PC-9 (cell line): ENCODE measurements at regions of chr3 and their contacts with region 1.

Region 1: DNA sequence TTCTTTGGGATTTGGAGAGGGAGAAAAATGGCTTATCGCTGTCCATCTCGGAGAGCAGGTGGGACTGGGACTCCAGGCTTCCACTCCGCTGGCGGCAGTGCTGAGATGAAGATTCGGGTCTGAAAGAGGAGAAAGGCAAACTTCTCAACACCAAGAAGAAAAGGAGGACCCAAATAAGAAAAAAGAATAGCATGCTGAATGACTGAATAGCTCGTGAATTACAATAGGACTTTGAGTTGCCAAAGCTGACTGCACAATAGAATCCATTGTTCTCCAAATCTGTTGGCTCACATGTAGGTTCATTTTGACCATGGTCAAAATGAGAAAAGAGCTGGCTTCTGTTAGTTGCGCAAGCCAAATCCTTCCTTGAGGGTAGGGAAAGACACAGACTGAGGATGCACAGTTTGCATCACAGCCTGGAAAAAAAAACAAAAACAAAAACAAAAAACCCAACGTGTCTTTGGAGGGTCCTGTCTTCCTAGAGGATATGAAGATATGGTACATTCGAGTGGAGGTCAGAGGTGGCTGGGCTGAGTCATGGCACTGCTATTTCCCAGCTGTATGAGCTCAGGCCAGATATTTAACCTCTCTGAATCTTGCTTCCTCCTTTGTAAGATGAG is 59.3 kb upstream of the LMOD3 start:
- DNase-seq: peak; percentile 40 to 67
- H3K4me3 ChIP-seq: no peak overlapping the region
- H3K27ac ChIP-seq: peak overlapping the region; percentile 97
- H3K4me1 ChIP-seq: peaks cover 60% of the 10 kb centered on the region
- H3K27me3 ChIP-seq: no peaks in the 10 kb centered on the region
- CTCF ChIP-seq: no peak

Region 2: GRCh38 chr3:69212411-69213139 is 30.9 kb after region 1 on chr3:
- CTCF ChIA-PET with region 1: interaction called, 13 read pairs
- POLR2A ChIA-PET with region 1: no interaction called
- intact Hi-C with region 1: loop called (anchors 1 kb)
- DNase-seq: peak in 1 of 2 experiments; percentile 95
- H3K4me3 ChIP-seq: no peak overlapping the region
- H3K27ac ChIP-seq: peak overlapping the region; percentile 97
- H3K4me1 ChIP-seq: peaks cover 45% of the 10 kb centered on the region
- H3K27me3 ChIP-seq: no peaks in the 10 kb centered on the region
- CTCF ChIP-seq: no peak

Region 3: DNA sequence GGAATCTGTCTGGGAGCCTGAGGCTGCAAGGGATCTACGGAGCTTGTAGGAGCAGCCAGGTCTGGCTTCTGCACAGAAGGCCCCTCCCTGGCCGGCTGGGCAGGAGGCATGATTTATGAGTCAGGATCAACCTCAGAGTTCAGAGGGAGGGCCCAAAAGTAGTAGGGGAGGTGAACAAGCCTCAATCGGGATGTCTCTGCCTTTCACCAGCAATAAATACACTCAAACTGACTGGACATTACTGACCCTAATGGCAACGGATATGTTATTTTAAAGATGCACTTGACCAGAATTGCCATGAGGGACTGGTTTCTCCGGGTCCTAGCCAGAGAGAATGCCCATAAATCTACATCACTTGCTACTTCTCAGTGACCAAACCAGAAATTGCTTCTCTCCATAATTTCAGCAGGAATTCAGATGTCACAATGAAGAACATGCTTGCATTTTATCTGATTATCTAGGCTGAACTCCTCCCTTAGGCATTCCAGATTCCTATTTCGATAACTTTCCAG is 50.3 kb after region 1 on chr3:
- CTCF ChIA-PET with region 1: interaction called, 5 read pairs
- POLR2A ChIA-PET with region 1: no interaction called
- intact Hi-C with region 1: loop called (anchors 1 kb)
- DNase-seq: peak; percentile 80 to 92
- H3K4me3 ChIP-seq: peak overlapping the region; percentile 35; the same call in 1 of the 2 replicates
- H3K27ac ChIP-seq: peak overlapping the region; percentile 92
- H3K4me1 ChIP-seq: peaks cover 83% of the 10 kb centered on the region
- H3K27me3 ChIP-seq: no peaks in the 10 kb centered on the region
- CTCF ChIP-seq: no peak

Region 4: DNA sequence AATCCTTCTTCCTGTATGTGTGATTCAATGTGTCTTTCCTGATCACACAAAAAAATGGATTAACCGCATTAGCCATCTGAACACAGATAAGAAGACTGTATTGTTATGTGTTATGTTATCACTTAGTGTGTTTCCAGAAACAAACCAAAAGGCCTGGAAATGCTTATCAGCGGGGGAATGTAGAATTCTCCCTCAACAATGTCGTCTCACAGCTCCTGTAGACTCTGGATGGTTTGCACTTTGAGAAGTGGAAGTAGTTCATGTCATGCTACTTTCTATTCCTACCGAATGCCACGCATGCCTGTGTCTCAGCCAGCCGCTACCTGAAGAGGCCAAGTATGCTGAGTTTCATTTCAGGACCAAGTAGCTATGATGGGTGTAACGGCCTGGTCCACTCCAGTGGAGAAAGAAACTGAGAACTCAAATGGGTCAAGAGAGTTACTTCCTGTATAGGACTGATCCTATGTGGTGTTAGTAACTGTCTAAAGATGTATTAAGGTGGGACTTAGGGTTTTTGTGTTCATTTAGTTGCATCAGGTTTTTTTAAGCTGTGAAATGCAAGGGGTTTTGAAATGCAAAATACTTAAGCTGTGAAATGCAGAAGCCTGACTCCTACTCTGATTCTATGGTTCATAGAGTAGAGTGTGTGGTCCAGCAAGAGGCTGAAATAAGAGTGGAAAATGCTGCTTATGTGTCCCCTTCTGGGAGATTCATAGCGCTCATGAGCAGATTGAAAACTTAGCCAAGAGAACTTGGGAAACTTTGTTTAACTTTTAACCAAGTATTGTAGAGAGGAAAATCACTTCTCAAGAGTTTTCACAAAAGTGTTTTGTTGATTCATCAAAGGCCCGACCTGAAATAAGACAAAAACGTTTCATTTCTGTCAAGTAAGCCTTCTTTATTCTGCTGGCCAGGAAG is 59.2 kb after region 1 on chr3:
- CTCF ChIA-PET with region 1: interaction called, 7 read pairs
- POLR2A ChIA-PET with region 1: no interaction called
- intact Hi-C with region 1: loop called (anchors 2 kb)
- DNase-seq: no peak
- H3K4me3 ChIP-seq: no peak overlapping the region
- H3K27ac ChIP-seq: no peak overlapping the region
- H3K4me1 ChIP-seq: peaks cover 30% of the 10 kb centered on the region
- H3K27me3 ChIP-seq: no peaks in the 10 kb centered on the region
- CTCF ChIP-seq: no peak

Region 5: DNA sequence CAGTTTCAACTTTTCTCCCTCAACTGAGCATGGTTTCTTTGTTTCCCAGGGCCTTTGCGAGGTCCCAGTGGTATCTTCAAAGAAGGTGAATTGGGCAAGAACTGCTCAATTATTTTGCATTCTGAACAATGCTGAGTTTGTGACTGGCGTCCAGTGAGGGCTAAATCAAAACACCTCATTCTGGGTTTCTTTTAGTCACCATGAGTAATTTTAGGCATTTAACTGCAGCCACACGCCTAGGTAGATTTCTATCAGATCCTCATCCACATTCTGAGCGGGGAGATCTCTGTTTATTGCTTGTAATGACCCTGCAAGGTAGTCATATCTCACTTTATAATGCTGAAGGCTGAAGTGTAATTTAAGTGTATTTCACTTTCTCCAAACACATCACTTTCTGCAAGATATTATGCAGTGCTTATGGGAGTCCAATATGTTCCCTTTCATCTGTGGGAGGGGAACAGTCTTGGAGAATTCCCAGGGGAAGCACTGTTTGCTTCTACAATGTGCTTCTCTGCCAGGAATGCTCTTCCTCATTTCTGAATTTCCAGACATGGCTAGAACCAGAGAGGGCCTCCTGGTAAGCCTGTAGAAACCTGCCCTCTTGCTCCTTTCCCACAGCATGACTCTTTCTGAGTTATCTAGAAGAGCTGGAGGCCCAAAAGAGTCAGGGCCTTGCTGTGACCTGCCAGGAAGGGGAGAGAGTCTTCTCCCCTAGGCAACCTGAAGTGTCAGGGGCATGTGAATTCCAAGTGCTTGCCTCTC is 112.5 kb after region 1 on chr3:
- CTCF ChIA-PET with region 1: no interaction called
- POLR2A ChIA-PET with region 1: interaction called, 3 read pairs
- intact Hi-C with region 1: loop called (anchors 2 kb)
- DNase-seq: peak; percentile 33 to 77
- H3K4me3 ChIP-seq: no peak overlapping the region
- H3K27ac ChIP-seq: peak overlapping the region; percentile 66
- H3K4me1 ChIP-seq: peaks cover 17% of the 10 kb centered on the region
- H3K27me3 ChIP-seq: no peaks in the 10 kb centered on the region
- CTCF ChIP-seq: no peak

Region 6: DNA sequence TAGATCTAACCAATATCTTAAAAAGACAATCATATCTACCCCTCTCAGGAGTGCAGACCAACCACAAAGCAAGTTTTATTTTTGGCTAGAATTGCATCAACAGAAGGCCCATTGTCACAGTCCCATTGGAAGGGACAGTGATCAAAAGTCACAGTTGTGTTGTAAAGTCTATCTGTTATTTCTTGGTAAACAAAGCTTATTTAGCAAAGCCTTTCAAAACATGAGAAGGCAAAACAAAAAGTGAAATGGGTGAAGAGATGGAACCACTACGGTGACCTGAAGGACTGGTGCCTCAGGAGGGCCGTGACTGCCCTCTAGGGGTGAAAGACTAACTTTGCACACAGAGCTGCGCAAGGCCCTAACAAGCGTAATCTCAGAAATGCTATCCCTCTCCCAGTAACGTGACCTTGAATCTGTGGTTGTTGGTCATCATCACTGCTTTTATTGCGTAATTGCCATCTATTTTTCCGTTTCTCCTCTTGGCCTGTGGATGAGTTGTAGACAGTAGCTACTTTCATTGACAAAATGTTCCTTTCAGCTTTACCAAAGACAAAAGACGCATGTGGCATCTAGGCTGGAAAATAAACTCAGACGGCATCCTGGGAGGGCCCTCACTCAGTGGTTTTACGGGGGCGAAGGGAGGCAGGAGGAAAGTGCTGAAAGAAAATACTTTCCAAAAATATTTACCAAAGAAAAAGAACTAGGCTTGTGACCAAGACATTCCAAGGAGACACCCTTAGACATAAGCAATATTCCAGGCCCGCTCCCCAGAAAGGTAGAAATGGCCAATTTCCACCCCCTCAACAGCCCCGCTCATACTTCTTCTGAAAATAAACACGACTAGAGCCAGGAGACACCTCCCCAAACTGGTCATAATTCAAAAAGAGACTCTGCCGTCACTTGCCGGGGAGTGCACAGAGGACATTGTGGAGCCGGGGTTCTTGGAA is 124.8 kb after region 1 on chr3:
- CTCF ChIA-PET with region 1: interaction called, 5 read pairs
- POLR2A ChIA-PET with region 1: interaction called, 5 read pairs
- intact Hi-C with region 1: loop called (anchors 5 kb)
- DNase-seq: peak; percentile 58 to 70
- H3K4me3 ChIP-seq: no peak overlapping the region
- H3K27ac ChIP-seq: peak overlapping the region; percentile 29; the same call in 1 of the 2 replicates
- H3K4me1 ChIP-seq: peaks cover 12% of the 10 kb centered on the region; the same call in 1 of the 2 replicates
- H3K27me3 ChIP-seq: no peaks in the 10 kb centered on the region
- CTCF ChIP-seq: peak; percentile 87

Region 7: GRCh38 chr3:69710153-69710977 is 528.7 kb after region 1 on chr3:
- CTCF ChIA-PET with region 1: no interaction called
- POLR2A ChIA-PET with region 1: no interaction called
- intact Hi-C with region 1: no loop called
- DNase-seq: no peak
- H3K4me3 ChIP-seq: no peak overlapping the region
- H3K27ac ChIP-seq: no peak overlapping the region
- H3K4me1 ChIP-seq: no peaks in the 10 kb centered on the region
- H3K27me3 ChIP-seq: no peaks in the 10 kb centered on the region
- CTCF ChIP-seq: no peak